B cell (primary cell): ENCODE measurements at regions of chr12 and their contacts with region 1.

Region 1: GRCh38 chr12:93167841-93168492 is 209.8 kb upstream of the NUDT4 start:
- DNase-seq: peak; percentile 79
- ATAC-seq: peak; percentile 69
- H3K4me3 ChIP-seq: peak overlapping the region; percentile 15 to 59 (median 33)
- H3K4me3 Mint-ChIP-seq: peak overlapping the region; percentile 81
- H3K27ac ChIP-seq: peak overlapping the region; percentile 74 to 88
- H3K27ac Mint-ChIP-seq: peak overlapping the region; percentile 85
- H3K4me1 ChIP-seq: peaks cover 65 to 68% of the 10 kb centered on the region in 2 donors
- H3K4me1 Mint-ChIP-seq: peaks cover 51% of the 10 kb centered on the region
- H3K27me3 ChIP-seq: no peaks in the 10 kb centered on the region
- H3K27me3 Mint-ChIP-seq: no peaks in the 10 kb centered on the region
- CTCF ChIP-seq: no peak

Region 2: DNA sequence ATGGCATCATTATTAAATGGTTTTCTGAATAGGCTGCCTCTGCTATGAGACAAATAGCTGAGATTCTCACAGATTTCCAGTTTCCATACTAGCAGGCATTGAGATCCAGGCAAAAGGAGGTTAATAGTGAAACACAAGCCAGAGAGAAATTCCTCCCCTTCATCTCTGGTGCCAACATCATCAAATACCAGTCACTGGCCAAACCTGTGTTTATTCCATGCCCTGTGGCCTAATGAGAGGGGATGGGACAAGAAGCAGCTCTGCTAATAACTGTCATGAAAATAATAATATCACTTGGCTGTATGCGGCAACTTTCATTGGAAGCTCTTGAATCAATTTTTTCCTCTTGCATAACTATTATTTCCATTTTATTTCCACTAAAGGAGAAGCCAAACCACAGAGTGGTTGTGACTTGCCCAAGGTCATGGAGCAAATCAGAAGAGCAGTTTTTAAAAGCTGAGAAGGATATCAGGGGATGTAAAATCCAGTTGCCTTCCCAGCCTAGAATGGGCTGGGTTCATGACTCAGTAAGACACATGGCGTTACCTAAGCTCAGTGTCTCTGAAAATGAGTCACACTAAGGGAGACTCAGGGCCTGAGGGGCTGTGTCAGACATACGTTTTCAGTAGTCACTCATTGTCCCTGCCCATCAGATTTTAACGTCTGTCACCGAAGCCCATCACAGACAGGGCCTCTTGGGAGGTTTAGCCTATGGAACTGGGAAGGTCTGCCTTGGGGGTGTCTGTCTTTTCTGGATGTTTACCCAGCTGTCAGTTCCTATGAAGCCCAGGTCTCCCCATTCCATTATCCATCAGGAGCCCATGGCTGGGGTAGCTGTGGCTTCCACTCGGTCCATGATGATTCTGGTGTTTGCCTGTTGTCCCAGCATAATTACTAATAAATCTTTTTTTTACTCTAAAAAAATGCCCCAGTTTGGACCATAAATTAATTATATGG is 30.0 kb before region 1 on chr12:
- CTCF ChIA-PET with region 1: no interaction called
- POLR2A ChIA-PET with region 1: no interaction called
- intact Hi-C with region 1: loop called (anchors 2 kb)
- DNase-seq: no peak
- ATAC-seq: no peak
- H3K4me3 ChIP-seq: peak overlapping the region in 1 of 5 experiments; percentile 41
- H3K4me3 Mint-ChIP-seq: peak overlapping the region; percentile 51
- H3K27ac ChIP-seq: peak overlapping the region; percentile 65 to 87
- H3K27ac Mint-ChIP-seq: peak overlapping the region; percentile 94
- H3K4me1 ChIP-seq: peaks cover 59 to 64% of the 10 kb centered on the region in 2 donors
- H3K4me1 Mint-ChIP-seq: peaks cover 57% of the 10 kb centered on the region
- H3K27me3 ChIP-seq: no peaks in the 10 kb centered on the region
- H3K27me3 Mint-ChIP-seq: no peaks in the 10 kb centered on the region
- CTCF ChIP-seq: no peak

Region 3: DNA sequence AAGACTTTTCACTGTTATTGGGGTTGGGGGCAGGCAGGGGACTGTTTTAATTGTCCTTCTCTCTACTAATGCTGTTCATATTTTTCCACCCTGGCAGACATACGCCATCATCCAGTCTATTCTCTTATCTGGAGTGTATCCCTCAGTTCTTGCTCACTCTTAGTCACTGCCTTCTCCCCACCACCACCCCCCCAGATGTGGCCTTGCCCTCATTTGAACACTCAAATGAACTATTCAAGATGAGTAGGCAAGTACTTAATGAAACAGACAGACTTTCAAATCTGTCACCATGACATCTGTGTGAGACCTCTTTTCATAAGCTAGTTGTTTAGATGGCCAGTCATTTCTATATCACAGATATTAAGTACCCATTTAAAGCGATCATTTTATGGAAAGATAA is 219.8 kb after region 1 on chr12:
- CTCF ChIA-PET with region 1: no interaction called
- POLR2A ChIA-PET with region 1: no interaction called
- intact Hi-C with region 1: loop called (anchors 5 kb)
- DNase-seq: no peak
- ATAC-seq: no peak
- H3K4me3 ChIP-seq: no peak overlapping the region
- H3K4me3 Mint-ChIP-seq: no peak overlapping the region
- H3K27ac ChIP-seq: no peak overlapping the region
- H3K27ac Mint-ChIP-seq: no peak overlapping the region
- H3K4me1 ChIP-seq: peaks cover 18 to 49% of the 10 kb centered on the region in 2 donors
- H3K4me1 Mint-ChIP-seq: peaks cover 56% of the 10 kb centered on the region
- H3K27me3 ChIP-seq: no peaks in the 10 kb centered on the region
- H3K27me3 Mint-ChIP-seq: no peaks in the 10 kb centered on the region
- CTCF ChIP-seq: no peak